Head of caudate nucleus (tissue), 42 donors: ENCODE measurements at regions of chr5 and their contacts with region 1.

Region 1: DNA sequence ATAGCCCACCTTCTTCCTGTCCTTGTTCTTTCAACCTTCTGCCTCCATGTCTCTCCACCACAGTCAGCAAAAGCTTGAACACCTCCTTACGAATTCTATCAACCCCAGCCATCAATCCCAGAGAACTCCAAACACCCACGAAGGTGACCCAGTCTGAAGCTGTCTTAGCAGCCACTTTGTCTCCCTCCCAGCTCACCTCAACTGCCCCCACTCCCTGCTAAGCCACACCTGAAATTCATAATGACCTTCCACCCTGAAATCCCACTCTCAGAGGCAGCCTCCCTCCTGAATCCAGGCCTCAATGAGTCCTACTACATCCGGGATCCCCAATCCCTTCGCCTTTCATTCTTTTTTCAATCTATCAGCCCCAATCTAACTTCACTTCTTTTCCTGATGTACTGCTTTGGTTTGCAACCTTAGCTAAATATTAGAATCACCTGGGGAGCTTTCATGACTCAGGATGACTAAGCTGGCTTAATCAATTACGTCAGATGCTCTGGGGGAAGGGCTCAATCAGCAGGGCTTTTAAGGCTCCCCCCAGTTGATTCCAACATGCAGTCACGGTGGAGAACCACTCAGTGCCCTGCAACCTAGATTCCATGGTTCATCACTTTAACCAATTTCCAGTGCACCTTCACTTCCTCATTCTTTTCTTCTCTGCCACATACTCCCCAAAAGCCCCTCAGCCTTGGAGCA is 32.2 kb downstream of the BHMT start:
- DNase-seq: peak in 33 of 42 donors; percentile 7 to 75 (median 39)

Region 2: GRCh38 chr5:79229357-79230174 is 85.7 kb after region 1 on chr5:
- intact Hi-C with region 1: loop called (anchors 10 kb)
- DNase-seq: peak in 1 of 42 donors; percentile 9

Region 3: GRCh38 chr5:79357398-79357797 is 213.6 kb after region 1 on chr5:
- intact Hi-C with region 1: no loop called
- DNase-seq: no peak